Heart left ventricle (tissue), 16 donors: ENCODE measurements at regions of chr2 and their contacts with region 1.

Region 1: DNA sequence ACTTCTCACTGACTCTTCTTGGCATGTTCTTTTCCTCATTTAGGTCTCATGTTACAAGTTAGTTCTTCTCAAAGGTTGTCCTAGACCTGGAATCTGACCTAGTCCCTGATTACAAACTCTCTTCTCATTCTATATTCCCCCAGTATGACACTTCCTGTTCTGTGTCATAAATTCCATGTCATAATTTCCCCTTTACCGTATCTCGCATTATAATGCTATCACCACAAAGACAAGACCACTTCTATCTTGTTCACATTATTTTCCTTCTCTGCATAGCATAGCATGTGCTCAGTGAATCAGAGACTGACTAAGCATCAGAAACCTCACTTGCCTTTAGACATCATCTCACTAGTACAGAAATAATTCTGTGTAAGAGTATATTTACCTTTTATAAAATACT is 63.6 kb upstream of the CAVIN2 start:
- DNase-seq: no peak
- ATAC-seq: no peak
- H3K4me3 ChIP-seq: no peak overlapping the region
- H3K27ac ChIP-seq: no peak overlapping the region
- H3K4me1 ChIP-seq: peaks cover 0 to 12% (median 7%) of the 10 kb centered on the region in 12 donors
- H3K27me3 ChIP-seq: no peaks in the 10 kb centered on the region
- CTCF ChIP-seq: no peak
- POLR2A ChIP-seq: no peak

Region 2: DNA sequence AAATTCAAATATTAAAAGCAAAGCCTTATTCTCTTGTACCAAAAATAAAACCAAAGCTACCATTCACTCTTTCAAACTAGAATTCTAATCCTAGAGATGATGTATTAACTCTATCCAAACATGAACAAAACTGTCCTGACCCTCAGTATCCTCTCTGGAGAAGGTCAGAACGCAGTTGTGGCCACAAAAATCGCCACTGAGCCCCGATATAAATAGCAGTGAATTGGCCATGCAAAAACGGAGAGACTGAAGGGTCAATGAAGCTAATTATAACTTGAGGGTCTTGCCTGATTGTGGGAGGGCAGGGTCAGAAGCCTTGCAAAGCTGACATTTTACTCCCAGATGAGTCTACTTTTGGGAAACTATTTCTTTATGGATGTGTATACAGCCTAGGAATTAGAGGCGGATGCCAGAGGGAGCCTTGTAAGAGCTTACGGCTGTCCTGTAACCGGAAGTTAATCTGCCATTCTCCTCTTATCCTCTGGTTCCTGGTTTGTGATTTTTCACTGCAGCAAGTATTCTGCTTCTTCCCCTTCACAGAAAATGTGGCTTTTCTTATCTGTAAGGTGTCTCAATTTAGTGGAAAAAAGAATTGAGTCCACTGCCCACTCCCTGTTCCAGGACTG is 91.7 kb before region 1 on chr2:
- intact Hi-C with region 1: loop called in 3 of 10 experiments (anchors 5 to 10 kb)
- DNase-seq: no peak
- ATAC-seq: peak in 3 of 4 donors; percentile 36 to 65 (median 44)
- H3K4me3 ChIP-seq: peak overlapping the region in 5 of 12 donors; percentile 2 to 30 (median 23)
- H3K27ac ChIP-seq: peak overlapping the region in 1 of 12 donors; percentile 7
- H3K4me1 ChIP-seq: peaks cover 0 to 12% (median 0%) of the 10 kb centered on the region in 12 donors
- H3K27me3 ChIP-seq: no peaks in the 10 kb centered on the region
- CTCF ChIP-seq: no peak
- POLR2A ChIP-seq: no peak

Region 3: DNA sequence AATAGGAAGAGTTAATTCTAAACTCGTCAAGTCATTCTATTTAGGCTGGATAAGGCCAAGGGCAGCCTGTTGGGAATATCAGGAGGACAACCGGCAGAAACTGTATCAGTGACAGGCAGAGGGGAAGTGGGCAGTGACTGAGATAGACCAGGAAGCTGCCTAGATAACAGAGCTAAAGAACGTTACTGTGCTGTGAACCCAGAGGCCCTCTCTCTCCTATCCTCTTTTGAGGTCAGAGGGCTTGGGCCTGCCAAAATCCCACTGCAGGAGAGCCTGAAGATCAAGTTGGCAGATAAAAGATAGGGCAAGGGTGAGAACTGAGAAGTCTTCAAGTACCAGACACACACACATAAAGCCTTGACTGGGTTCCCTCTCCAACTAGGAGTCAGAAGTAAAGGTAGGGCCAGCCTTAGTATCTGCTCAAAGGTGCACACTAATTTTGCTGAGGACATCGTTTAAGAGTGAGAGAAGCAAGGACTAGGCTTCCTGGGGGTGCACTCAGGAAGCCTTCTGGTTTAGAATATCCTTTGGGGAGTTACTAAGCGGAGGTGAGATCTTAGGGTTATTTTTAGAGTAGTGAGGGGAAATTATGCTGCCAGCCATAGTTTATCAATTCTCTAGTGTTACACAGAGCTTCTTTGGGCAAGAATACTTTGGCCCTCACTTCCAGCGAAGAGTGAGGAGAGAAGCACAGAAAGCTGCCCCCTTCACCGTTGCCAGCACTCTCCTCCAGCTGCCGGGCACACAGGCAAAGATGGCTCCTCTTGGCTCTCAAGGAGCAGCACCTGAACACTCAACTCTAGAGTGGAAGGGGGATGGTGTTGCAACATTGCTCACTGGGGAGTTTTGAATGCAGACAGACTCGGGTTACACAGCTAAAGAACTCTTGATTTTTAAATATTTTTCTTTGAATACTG is 73.4 kb before region 1 on chr2:
- intact Hi-C with region 1: loop called in 1 of 10 experiments (anchors 5 kb)
- DNase-seq: peak in 4 of 5 donors; percentile 40 to 55 (median 51)
- ATAC-seq: peak; percentile 79 to 95 (median 86)
- H3K4me3 ChIP-seq: peak overlapping the region in 7 of 12 donors; percentile 0 to 24 (median 18)
- H3K27ac ChIP-seq: peak overlapping the region; percentile 43 to 95 (median 84)
- H3K4me1 ChIP-seq: peaks cover 3 to 89% (median 55%) of the 10 kb centered on the region in 12 donors
- H3K27me3 ChIP-seq: no peaks in the 10 kb centered on the region
- CTCF ChIP-seq: no peak
- POLR2A ChIP-seq: no peak

Region 4: GRCh38 chr2:191942090-191942738 is 31.7 kb after region 1 on chr2:
- intact Hi-C with region 1: no loop called
- DNase-seq: no peak
- ATAC-seq: peak in 1 of 4 donors; percentile 33
- H3K4me3 ChIP-seq: no peak overlapping the region
- H3K27ac ChIP-seq: peak overlapping the region in 1 of 12 donors; percentile 50
- H3K4me1 ChIP-seq: peaks cover 0 to 10% (median 0%) of the 10 kb centered on the region in 12 donors
- H3K27me3 ChIP-seq: no peaks in the 10 kb centered on the region
- CTCF ChIP-seq: no peak
- POLR2A ChIP-seq: no peak

Region 5: GRCh38 chr2:193153576-193153975 is 1243.1 kb after region 1 on chr2:
- intact Hi-C with region 1: no loop called
- DNase-seq: no peak
- ATAC-seq: no peak
- H3K4me3 ChIP-seq: no peak overlapping the region
- H3K27ac ChIP-seq: no peak overlapping the region
- H3K4me1 ChIP-seq: no peaks in the 10 kb centered on the region
- H3K27me3 ChIP-seq: no peaks in the 10 kb centered on the region
- CTCF ChIP-seq: no peak
- POLR2A ChIP-seq: no peak